ENCODE measurements at regions of chr19 and their contacts with region 1.

Region 1: GRCh38 chr19:45711851-45712698 is 18.6 kb downstream of the FBXO46 start:
- DNase-seq: no peak
- H3K4me3 ChIP-seq: no peak overlapping the region
- H3K27ac ChIP-seq: no peak overlapping the region
- H3K4me1 ChIP-seq: no peaks in the 10 kb centered on the region
- H3K27me3 ChIP-seq: no peaks in the 10 kb centered on the region
- CTCF ChIP-seq: no peak

Region 2: DNA sequence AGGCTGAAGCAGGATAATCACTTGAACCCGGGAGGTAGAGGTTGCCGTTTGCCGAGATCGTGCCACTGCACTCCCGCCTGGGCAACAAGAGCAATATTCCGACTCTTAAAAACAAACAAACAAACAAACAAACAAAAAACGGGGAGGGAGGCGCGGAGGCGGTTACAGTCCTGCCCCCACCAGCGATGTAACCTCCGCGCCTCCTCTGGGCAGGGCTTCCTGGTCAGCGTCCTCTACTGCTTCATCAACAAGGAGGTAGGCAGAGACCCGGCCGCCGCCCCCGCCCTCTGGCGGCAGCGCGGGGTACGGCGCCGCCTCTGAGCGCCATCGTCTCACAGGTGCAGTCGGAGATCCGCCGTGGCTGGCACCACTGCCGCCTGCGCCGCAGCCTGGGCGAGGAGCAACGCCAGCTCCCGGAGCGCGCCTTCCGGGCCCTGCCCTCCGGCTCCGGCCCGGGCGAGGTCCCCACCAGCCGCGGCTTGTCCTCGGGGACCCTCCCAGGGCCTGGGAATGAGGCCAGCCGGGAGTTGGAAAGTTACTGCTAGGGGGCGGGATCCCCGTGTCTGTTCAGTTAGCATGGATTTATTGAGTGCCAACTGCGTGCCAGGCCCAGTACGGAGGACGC is 30.6 kb before region 1 on chr19:
- CTCF ChIA-PET with region 1: no interaction called
- POLR2A ChIA-PET with region 1: interaction called, 17 read pairs
- intact Hi-C with region 1: no loop called
- DNase-seq: peak; percentile 79
- H3K4me3 ChIP-seq: peak overlapping the region; percentile 41
- H3K27ac ChIP-seq: peak overlapping the region; percentile 14
- H3K4me1 ChIP-seq: peaks cover 10% of the 10 kb centered on the region
- H3K27me3 ChIP-seq: no peaks in the 10 kb centered on the region
- CTCF ChIP-seq: peak; percentile 86

Region 3: GRCh38 chr19:45774765-45775164 is 62.7 kb after region 1 on chr19:
- CTCF ChIA-PET with region 1: no interaction called
- POLR2A ChIA-PET with region 1: no interaction called
- intact Hi-C with region 1: no loop called
- DNase-seq: no peak
- H3K4me3 ChIP-seq: no peak overlapping the region
- H3K27ac ChIP-seq: no peak overlapping the region
- H3K4me1 ChIP-seq: peaks cover 4% of the 10 kb centered on the region
- H3K27me3 ChIP-seq: no peaks in the 10 kb centered on the region
- CTCF ChIP-seq: no peak

Measured in A673 (cell line).